ENCODE measurements at regions of chr2 and their contacts with region 1.

Region 1: DNA sequence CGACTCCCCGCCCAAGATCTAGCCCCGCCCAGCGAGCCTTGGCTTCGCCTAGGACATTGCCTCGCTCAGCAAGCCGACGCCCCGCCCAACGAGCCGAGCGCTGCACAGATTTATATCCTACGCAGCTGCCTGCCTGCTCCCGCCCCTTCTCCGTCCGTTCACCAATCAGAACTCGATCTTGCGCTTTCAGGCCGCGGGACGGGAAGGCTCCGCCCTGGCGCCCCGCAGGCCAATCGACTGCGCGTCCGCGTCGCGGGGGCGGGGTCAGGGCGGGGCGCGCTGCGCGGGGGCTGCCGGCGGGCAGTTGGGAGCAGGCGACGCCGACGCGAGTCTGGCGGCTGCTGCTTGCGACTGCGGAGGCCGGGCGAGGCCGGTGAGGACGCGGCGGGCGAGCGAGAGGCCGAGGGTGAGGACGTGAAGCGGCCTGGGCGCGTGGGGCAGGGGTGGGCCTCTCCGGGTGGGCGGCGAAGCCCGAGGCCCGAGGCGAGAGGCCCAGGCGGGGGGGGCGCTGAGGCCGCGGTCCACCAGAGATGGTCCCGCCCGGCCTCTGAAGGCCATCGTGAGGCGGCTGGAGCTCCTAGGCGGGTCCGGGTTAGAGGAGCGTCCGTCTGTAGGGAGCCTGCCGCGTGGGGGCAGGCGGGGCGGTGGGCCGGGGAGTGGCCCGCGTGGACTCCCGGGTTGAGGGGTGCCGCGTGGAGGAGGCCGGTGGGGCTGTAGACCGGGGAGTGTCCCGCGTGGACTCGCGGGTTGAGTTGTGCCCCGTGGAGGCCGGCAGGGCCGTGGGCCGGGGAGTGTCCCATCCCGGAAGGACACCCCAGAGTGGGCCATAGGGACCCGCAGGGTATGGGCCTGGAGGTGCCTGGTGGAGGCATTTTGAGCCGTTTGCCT is at the start of gene FARP2:
- DNase-seq: peak; percentile 98
- H3K4me3 Mint-ChIP-seq: peak within 1 kb of the TSS; percentile 79
- H3K27ac Mint-ChIP-seq: peak within 1 kb of the TSS; percentile 92
- H3K4me1 Mint-ChIP-seq: peaks cover 69% of the 10 kb centered on the region
- H3K27me3 Mint-ChIP-seq: no peaks in the 10 kb centered on the region
- CTCF ChIP-seq: no peak
- total RNA-seq, gene FARP2: 59.0 and 67.7 TPM in 2 replicates

Region 2: DNA sequence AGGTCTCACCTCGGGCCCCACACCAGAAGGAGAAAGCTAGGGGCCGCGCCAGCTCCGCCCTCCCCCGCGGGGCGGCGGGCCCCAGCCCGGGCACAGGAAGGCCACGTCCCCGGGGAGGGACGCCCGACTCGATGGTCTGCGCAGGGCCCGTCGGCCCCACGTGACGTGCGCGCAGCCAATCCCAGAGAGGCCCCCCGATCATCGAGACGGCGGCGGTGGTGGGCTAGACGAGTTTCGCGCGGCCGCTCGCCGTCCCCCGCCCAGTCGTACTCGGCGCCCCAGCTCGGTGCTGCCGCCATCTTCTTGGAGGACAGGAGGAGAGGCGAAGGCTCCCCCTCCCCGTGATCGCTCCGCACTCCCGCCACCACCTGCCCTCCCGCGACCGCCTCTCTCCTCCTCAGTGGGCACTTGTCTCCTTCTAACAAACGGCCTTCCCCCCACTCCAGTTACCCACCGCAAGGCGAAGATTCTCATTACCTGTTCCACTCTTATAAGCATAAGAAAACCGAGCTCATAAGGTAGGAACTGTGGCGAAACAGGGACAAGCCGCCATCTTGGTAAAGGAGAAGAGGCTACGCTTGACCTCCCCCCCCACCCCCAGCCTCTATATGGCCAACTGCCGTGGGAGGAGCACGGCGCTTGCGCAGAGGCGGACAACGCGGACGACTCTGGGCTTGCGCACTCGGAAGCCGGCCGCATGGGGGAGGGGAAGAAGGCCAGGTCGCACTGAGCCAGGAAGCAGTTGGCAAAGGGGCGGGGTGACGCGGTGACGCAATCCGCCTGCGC is 40.9 kb before region 1 on chr2 and contains the start of gene HDLBP:
- CTCF ChIA-PET with region 1: no interaction called
- intact Hi-C with region 1: loop called (anchors 5 kb)
- DNase-seq: peak; percentile 100
- H3K4me3 Mint-ChIP-seq: peak within 1 kb of the TSS; percentile 97
- H3K27ac Mint-ChIP-seq: peak within 1 kb of the TSS; percentile 100
- H3K4me1 Mint-ChIP-seq: peaks cover 53% of the 10 kb centered on the region
- H3K27me3 Mint-ChIP-seq: no peaks in the 10 kb centered on the region
- CTCF ChIP-seq: no peak
- total RNA-seq, gene HDLBP: 429 and 493 TPM in 2 replicates

Region 3: GRCh38 chr2:241373446-241373845 is 17.2 kb after region 1 on chr2:
- CTCF ChIA-PET with region 1: interaction called, 6 read pairs
- intact Hi-C with region 1: loop called (anchors 2 kb)
- DNase-seq: peak; percentile 5
- H3K4me3 Mint-ChIP-seq: no peak overlapping the region
- H3K27ac Mint-ChIP-seq: peak overlapping the region; percentile 91
- H3K4me1 Mint-ChIP-seq: peaks cover 70% of the 10 kb centered on the region
- H3K27me3 Mint-ChIP-seq: no peaks in the 10 kb centered on the region
- CTCF ChIP-seq: no peak

Region 4: GRCh38 chr2:241391892-241392665 is 35.9 kb after region 1 on chr2:
- CTCF ChIA-PET with region 1: interaction called, 7 read pairs
- intact Hi-C with region 1: loop called (anchors 5 kb)
- DNase-seq: peak; percentile 62
- H3K4me3 Mint-ChIP-seq: no peak overlapping the region
- H3K27ac Mint-ChIP-seq: peak overlapping the region; percentile 65
- H3K4me1 Mint-ChIP-seq: peaks cover 19% of the 10 kb centered on the region
- H3K27me3 Mint-ChIP-seq: no peaks in the 10 kb centered on the region
- CTCF ChIP-seq: no peak